Left cardiac atrium (tissue), 4 donors: ENCODE measurements at regions of chr1 and their contacts with region 1.

Region 1: DNA sequence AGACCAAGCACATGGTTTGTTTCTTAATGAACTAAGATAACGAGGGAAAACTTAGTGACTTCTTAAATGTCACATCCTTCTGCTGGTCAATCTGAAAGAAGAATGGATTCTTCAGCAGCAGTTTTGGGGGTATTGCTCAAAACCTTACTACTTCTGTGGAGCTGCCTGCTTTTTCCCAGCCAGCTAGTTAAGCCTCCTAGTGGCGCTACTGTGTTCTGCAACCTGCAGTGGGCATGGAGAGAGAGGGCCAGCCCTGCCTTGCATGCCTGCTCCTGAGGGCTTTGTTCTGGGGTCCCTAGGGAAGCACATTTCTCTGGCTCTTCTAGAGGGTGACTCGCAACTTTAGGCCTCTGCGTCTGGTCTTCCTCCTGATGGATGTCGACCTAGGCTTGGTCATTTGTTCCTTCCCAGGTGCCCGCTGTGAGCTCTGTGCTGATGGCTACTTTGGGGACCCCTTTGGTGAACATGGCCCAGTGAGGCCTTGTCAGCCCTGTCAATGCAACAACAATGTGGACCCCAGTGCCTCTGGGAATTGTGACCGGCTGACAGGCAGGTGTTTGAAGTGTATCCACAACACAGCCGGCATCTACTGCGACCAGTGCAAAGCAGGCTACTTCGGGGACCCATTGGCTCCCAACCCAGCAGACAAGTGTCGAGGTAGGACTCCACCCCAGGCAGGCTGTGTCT is 42.0 kb downstream of the LAMC2 start:
- DNase-seq: peak; percentile 48
- ATAC-seq: peak; percentile 65 to 74

Region 2: DNA sequence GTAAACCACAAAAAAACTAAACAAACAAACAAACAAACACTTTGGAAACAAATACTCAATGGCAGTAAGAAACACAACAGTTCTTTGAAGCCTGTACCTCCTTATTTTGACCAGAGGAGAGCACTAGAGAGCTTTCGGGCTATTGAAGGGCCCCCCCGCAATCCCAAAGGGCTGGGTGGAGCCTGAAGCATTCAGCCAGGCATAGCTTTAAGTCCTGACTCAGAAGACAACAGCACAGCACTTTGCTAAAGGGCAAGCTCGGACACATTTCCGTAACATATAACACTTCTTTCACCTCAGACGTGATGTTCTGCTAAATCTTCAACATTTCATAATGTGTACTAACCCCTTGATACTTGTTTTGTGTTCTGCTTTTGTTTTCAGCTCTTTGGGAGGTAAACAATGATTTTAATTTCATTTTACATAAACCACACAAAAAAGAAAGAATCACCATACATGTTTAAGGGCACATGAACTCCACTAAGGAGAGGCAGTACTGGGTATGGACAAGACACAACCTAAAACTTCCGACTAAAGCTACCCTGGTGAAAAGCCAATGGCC is 265.5 kb before region 1 on chr1:
- intact Hi-C with region 1: loop called (anchors 1 to 10 kb)
- DNase-seq: peak; percentile 84
- ATAC-seq: peak; percentile 98 to 100

Region 3: GRCh38 chr1:183148599-183148998 is 79.5 kb before region 1 on chr1:
- intact Hi-C with region 1: loop called in 1 of 2 experiments (anchors 10 kb)
- DNase-seq: no peak
- ATAC-seq: peak; percentile 41 to 88

Region 4: GRCh38 chr1:183291802-183292514 is 63.9 kb after region 1 on chr1:
- intact Hi-C with region 1: no loop called
- DNase-seq: peak; percentile 57
- ATAC-seq: no peak